Cardiac septum (tissue), 1 donor: ENCODE measurements at regions of chr3 and their contacts with region 1.

Region 1: DNA sequence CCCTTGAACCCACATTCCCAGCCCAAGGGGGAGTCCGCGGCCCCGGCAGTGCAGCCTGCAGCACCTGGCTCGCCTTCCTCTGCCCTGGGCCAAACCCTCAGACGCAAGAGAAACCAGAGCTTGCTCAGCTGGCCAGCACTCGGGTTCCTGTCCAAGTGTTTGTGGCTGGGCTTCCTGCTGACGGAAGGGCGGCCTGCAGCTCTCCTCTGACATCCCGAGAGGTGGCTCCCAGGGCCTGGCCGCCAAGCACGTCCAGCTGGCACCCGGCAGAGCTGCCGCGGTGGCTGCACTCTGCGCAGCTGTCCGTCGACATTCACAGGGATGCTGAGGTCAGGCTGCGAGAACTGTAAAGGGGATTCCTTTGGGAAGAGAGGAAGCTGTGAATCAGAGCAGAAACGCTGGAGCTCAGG is 85.6 kb downstream of the CPN2 start:
- DNase-seq: peak; percentile 93

Region 2: GRCh38 chr3:193780810-193781472 is 484.5 kb before region 1 on chr3:
- intact Hi-C with region 1: loop called (anchors 2 kb)
- DNase-seq: peak; percentile 82

Region 3: GRCh38 chr3:194003125-194004057 is 262.1 kb before region 1 on chr3:
- intact Hi-C with region 1: loop called (anchors 1 kb)
- DNase-seq: peak; percentile 94

Region 4: GRCh38 chr3:194070634-194071409 is 194.7 kb before region 1 on chr3:
- intact Hi-C with region 1: loop called (anchors 2 kb)
- DNase-seq: peak; percentile 93

Region 5: DNA sequence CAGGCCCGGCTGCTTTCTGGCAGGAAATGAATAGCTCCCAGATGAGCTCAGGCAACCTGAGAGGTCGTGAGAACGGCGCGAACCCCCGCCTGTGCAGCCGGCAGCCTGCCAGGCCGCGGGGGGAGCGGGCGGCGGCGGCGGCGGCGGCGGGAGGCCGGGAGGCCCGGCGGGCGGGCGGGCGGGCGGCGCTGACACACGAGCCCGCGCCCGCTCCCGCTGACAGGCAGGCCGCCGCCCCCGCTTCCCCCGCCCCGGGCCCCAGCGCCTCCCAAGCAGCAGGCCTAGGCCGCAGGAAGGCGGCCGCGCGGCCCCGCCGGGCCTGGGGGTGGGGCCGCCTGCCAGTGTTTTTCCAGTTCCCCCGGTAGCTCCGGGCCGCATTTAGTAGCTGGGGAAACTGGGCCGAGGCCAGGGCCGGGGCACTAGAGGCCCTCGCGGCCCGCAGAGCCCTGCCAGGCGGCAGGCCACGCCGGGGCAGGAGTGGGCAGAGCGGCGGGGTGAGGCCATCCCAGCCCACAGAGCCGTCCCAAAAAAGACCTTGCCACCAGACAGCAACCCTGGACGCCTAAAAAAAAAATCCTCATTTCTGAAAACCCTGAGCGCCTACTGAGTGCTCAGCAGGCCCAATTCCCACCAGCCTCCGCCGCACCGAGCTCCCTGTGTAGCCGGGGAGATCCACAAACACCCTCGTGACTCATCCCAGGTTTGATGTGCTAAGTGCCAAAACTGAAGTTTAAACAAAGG is 123.9 kb before region 1 on chr3:
- intact Hi-C with region 1: loop called (anchors 1 kb)
- DNase-seq: peak; percentile 94

Region 6: GRCh38 chr3:194250098-194251002 is 15.1 kb before region 1 on chr3:
- intact Hi-C with region 1: no loop called
- DNase-seq: peak; percentile 81